ENCODE measurements at regions of chr14 and their contacts with region 1.

Region 1: DNA sequence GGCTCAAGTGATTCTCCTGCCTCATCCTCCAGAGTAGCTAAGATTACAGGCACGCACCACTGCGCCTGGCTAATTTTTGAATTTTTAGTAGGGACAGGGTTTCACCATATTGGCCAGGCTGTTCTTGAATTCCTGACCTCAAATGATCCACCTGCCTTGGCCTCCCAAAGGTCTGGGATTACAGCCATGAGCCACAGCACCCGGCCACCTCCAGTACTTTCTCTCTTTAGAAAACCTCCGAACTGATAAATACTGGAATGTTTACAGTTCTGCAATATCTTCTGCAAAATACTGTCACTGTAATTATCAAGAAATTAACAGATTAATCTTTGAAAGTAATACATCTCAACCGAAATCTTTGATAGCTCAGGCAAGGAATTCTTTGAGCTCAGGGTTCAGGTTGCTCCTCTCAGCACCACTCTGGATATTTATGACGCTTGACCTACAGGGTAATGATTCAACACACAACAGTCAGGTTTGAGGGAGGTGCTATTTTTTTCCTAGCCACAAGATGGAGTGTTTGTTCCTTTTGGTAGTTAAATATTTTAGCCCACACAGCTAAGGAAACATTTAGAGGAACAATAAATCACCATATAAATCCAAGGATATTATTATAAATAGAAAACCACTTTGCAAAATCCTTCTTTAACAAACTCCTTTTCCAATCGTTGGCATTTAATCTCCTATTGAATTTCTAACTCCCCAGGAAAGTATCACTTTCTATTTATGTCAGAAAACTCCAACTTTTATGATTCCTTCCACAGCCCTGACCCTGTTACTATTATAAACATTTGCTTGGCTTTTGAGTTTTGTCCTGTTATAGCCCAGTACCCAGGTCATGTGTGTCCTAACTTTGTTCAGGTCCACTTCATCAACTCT is 48.6 kb upstream of the GTF2A1 start:
- DNase-seq: no peak
- ATAC-seq: peak; percentile 78
- H3K4me3 Mint-ChIP-seq: no peak overlapping the region
- H3K27ac Mint-ChIP-seq: peak overlapping the region; percentile 44; the same call in 1 of the 2 replicates
- H3K4me1 Mint-ChIP-seq: peaks cover 37% of the 10 kb centered on the region
- H3K27me3 Mint-ChIP-seq: no peaks in the 10 kb centered on the region
- CTCF ChIP-seq: peak; percentile 44

Region 2: DNA sequence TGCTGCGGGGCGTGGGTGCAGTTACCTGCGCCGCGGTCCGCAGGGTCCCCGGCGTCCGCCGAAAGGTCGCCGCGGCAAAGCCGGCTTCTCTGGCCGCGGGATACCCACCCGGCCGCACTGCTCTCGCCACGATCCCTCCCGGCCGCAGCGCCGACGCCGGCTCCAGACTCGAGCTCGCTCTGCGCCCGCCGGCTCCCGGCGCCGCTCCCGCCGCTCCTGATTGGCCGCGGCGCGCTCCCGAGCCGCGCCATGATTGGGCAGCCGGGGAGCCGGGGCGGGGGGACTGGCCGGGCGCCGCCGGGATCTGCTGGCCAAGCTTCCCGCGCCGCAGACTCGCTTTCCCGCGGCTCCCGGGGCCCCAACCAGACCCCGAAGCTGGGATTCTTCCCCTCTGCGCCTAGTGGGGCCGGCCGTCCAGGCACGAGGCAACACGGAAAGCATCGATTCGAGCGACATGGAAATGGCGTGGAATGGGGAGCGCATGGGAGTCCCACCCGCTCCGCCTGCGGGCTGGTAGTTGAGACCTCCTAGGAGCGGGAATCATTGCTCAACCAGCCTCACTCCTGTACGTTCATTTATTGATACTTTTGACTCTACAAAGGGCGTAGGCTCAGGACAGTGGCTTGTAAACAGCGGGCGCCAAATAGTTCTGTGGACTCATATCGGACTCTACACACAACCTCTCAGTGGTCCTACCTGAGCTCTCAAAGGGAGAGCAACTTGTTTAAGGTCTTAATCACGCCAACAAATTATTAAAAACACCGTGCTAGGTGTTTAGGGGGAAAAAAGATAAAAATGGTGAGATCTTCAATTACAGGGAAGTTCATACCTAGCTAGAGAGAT is 167.2 kb after region 1 on chr14:
- CTCF ChIA-PET with region 1: interaction called, 43 read pairs
- POLR2A ChIA-PET with region 1: no interaction called
- DNase-seq: peak; percentile 84
- ATAC-seq: peak; percentile 90
- H3K4me3 Mint-ChIP-seq: peak overlapping the region; percentile 81
- H3K27ac Mint-ChIP-seq: no peak overlapping the region
- H3K4me1 Mint-ChIP-seq: peaks cover 44% of the 10 kb centered on the region
- H3K27me3 Mint-ChIP-seq: peaks cover 31% of the 10 kb centered on the region
- CTCF ChIP-seq: no peak

Region 3: DNA sequence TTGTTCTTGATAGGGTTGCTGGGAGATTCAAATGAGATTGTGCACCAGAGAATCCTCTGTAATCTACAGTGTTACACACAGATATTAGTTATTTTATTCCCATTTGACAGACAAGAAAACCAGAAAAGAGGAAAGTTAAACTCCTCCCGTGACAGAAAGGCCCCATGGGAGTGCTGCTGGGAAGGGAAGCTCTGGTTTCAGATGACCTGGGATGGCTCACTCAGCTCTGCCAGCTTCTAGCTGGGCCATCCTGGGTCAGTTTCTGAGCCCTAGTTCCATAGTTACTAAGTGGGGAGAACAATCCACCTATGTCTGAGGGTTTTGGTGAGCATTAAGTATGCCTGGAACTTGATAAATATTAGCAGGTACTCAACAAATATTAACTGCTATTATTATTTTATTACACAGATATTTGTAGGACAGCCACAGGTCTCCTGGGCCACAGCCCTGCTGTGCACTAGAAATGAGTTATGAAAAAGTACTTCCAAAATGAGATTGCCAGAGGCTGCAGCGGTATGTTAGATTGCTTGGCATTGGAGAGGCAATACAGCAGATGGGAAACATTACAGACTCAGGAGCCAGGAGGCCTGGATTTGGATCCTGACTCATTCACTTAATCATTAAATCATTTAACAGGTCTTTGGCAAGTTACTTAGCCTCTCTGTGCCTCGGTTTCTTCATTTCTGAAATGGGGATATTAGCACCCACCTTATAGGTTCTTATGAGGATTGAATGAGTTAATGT is 177.9 kb after region 1 on chr14:
- CTCF ChIA-PET with region 1: interaction called, 87 read pairs
- POLR2A ChIA-PET with region 1: no interaction called
- DNase-seq: no peak
- ATAC-seq: no peak
- H3K4me3 Mint-ChIP-seq: no peak overlapping the region
- H3K27ac Mint-ChIP-seq: no peak overlapping the region
- H3K4me1 Mint-ChIP-seq: peaks cover 24% of the 10 kb centered on the region
- H3K27me3 Mint-ChIP-seq: peaks cover 4% of the 10 kb centered on the region; the same call in 1 of the 2 replicates
- CTCF ChIP-seq: no peak

Region 4: DNA sequence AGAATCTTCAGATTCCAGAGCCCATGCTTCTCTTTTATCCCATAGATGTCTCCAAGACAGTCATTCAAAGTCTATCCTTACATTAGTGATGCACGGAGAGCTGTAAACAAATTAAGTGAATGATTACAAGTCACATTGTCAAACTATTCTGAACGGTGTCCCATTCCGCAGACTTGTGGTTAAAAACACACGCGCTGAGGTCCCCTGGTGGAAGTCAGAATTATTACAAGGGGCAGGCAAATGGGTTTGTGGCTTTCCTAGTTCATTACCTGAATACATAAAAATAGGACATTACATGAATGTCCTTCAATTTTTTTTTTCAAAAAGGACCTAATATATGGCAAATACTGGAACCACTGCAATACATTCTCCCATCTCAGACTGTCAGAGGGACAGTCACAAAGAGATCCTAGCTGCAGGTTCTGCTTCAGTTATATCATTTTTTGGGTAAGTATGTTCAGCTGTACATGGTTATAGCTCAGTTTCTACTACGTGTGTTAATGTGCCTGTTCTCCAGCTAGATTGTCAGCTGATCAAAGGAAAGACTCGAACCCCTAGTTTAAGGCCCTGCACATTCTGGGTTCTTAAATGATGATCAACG is 183.9 kb after region 1 on chr14:
- CTCF ChIA-PET with region 1: interaction called, 87 read pairs
- POLR2A ChIA-PET with region 1: interaction called, 4 read pairs
- DNase-seq: peak; percentile 62
- ATAC-seq: peak; percentile 66
- H3K4me3 Mint-ChIP-seq: peak overlapping the region; percentile 29
- H3K27ac Mint-ChIP-seq: no peak overlapping the region
- H3K4me1 Mint-ChIP-seq: peaks cover 30% of the 10 kb centered on the region
- H3K27me3 Mint-ChIP-seq: peaks cover 4% of the 10 kb centered on the region; the same call in 1 of the 2 replicates
- CTCF ChIP-seq: peak; percentile 81

Region 5: DNA sequence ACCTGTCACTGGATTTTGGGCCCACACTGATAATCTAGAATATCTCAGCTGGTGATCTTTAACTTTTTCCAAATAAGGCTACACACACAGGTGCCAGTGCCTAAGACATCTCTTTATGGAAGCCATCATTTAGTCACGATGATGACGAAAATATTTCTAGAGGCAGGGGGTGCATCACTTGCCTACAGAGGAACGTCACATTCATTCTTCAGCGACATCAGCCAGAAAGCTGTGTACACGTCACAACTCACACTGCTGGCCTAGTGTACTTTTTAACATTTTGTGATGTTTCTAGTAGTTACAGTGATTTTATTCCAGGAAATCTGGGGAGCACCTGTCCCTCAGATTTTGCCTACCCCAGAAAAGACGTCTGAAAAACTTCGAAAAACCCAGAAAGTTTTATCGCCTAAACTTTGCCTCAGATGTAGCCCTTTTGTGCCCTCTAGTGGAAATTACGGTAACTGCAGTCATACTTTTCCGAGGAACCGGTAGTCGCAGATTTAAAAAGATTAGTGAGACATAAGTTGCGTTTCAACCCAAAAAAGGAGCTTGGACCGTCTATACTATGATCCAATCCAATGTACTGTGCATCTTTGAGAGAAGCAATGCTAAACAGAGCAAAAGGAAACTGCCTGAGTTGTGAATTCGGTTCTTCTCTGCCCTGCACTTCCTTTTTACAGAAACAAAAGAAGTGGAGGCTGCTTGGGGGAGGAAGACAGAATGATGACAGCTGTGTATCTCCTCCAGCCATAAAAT is 195.1 kb after region 1 on chr14:
- CTCF ChIA-PET with region 1: interaction called, 19 read pairs
- POLR2A ChIA-PET with region 1: no interaction called
- DNase-seq: peak; percentile 42
- ATAC-seq: peak; percentile 56
- H3K4me3 Mint-ChIP-seq: peak overlapping the region; percentile 59
- H3K27ac Mint-ChIP-seq: no peak overlapping the region
- H3K4me1 Mint-ChIP-seq: peaks cover 4% of the 10 kb centered on the region
- H3K27me3 Mint-ChIP-seq: no peaks in the 10 kb centered on the region
- CTCF ChIP-seq: peak; percentile 82

Measured in WTC11 (cell line).